ENCODE measurements at regions of chr3 and their contacts with region 1.

Region 1: DNA sequence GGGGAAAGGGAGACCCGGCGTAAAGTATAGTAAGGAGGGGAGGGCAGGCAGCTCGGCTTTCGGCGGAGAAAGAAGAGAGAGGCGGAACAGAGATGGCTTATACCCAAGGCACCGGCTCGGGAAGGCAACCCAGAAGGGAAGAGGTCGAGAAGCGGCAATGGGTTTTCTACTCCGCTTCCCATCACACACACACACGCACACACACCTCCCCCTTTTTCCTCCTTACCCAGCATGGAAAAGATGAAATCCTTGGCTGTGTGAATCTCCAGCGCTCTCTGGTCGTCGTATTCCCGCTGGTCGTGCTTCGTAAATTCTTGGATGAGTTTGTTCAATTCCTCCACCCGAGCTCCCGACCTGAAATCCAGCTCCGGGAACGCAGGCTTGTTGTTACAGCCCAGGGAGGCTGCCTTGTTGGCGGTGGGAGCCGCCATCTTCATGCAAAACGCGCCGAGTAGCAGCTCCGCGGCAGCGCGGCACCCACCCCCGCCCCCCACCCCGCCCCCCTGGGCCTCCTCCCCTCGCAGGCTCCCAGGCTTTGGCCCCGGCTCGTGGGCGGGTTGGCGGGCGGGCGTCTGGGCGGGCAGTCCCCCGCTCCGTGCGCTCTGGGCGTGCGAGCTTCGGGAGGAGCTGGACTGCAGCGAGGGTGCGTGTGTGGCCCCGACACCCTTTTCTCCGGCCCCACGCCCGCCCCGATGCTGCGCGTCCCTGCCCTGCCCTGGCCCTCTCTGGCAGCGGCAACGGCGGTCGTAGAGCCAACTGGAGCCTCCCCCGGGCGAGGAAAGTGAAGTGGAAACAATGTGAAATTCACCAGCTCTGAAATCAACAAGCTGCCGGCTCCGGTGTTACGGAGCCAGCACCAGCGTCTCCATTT is at the start of gene MB21D2:
- DNase-seq: peak; percentile 93
- H3K4me3 ChIP-seq: peak within 1 kb of the TSS; percentile 80 to 86 (median 84)
- H3K27ac ChIP-seq: peak within 1 kb of the TSS; percentile 91 to 96 (median 94)
- H3K4me1 ChIP-seq: peaks cover 27 to 61% (median 50%) of the 10 kb centered on the region in 4 donors
- H3K27me3 ChIP-seq: no peaks in the 10 kb centered on the region
- CTCF ChIP-seq: peak in 2 of 3 experiments; percentile 4 to 8
- EP300 ChIP-seq: no peak
- POLR2A ChIP-seq: no peak
- total RNA-seq, gene MB21D2: 5.4 to 11.5 (median 8.2) TPM

Region 2: DNA sequence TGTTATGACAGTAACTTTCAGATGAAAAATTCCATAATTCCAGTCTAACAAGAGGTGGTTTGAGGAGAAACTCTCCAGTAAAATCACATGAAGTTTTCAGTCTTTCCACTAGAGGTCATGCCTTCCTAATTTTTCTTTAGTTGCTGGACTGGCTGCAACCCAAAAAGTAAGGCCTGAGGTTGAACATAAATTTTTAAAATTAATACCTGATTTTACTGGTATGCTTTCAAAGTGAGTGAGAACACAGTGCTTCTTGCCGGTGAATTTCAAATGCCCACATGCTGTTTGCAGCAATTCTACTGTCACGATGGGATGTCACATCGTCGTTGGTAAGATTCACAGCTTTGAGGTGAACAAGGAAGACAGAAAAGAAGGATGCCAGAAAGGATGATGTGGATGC is 101.3 kb before region 1 on chr3:
- intact Hi-C with region 1: loop called (anchors 2 kb)
- DNase-seq: no peak
- H3K4me3 ChIP-seq: no peak overlapping the region
- H3K27ac ChIP-seq: no peak overlapping the region
- H3K4me1 ChIP-seq: peaks cover 7 to 29% (median 18%) of the 10 kb centered on the region in 4 donors
- H3K27me3 ChIP-seq: no peaks in the 10 kb centered on the region
- CTCF ChIP-seq: peak; percentile 71 to 74 (median 73)
- EP300 ChIP-seq: no peak
- POLR2A ChIP-seq: no peak

Region 3: GRCh38 chr3:192831111-192831644 is 86.5 kb before region 1 on chr3:
- intact Hi-C with region 1: loop called (anchors 5 kb)
- DNase-seq: no peak
- H3K4me3 ChIP-seq: no peak overlapping the region
- H3K27ac ChIP-seq: no peak overlapping the region
- H3K4me1 ChIP-seq: peaks cover 17 to 54% (median 48%) of the 10 kb centered on the region in 4 donors
- H3K27me3 ChIP-seq: no peaks in the 10 kb centered on the region
- CTCF ChIP-seq: no peak
- EP300 ChIP-seq: no peak
- POLR2A ChIP-seq: no peak

Region 4: GRCh38 chr3:193040836-193041672 is 123.4 kb after region 1 on chr3:
- intact Hi-C with region 1: loop called (anchors 5 kb)
- DNase-seq: peak; percentile 5
- H3K4me3 ChIP-seq: no peak overlapping the region
- H3K27ac ChIP-seq: no peak overlapping the region
- H3K4me1 ChIP-seq: no peaks in the 10 kb centered on the region
- H3K27me3 ChIP-seq: no peaks in the 10 kb centered on the region
- CTCF ChIP-seq: peak; percentile 53 to 56 (median 53)
- EP300 ChIP-seq: no peak
- POLR2A ChIP-seq: no peak